ENCODE measurements at regions of chr3 and their contacts with region 1.

Region 1: GRCh38 chr3:30199096-30199759 is 407.2 kb upstream of the TGFBR2 start:
- DNase-seq: peak; percentile 89
- H3K4me3 Mint-ChIP-seq: no peak overlapping the region
- H3K27ac Mint-ChIP-seq: no peak overlapping the region
- H3K4me1 Mint-ChIP-seq: peaks cover 4% of the 10 kb centered on the region
- H3K27me3 Mint-ChIP-seq: peaks cover 2% of the 10 kb centered on the region

Region 2: DNA sequence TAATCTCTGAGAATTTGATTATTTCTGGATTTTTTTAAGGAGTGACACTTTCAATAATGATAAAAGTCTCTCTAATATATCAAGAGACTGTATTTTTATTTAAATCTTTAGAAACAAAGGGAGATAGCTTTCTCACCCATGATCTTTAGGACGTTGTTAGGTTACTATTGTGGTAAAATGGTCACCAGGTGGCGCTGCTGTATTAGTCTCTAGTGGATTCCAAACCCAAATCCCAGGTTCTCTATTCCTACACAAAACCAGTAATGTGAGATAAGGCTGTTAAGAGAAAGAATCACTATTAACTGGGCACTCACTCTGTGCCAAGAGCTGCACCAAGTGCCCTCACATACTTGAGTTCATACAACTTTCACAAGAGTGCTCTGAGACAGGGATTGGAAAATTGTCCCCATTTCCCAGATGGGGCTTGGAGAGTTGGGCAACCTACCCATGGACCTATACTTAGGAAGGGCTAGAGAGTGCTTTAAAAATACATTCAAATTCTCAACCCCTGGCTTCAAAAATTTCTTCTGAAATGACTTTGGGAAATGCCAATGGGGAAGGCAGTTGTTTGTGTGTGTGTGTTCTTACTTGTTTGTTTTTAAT is 186.2 kb before region 1 on chr3:
- intact Hi-C with region 1: loop called (anchors 2 kb)
- DNase-seq: peak; percentile 79
- H3K4me3 Mint-ChIP-seq: no peak overlapping the region
- H3K27ac Mint-ChIP-seq: no peak overlapping the region
- H3K4me1 Mint-ChIP-seq: peaks cover 3% of the 10 kb centered on the region
- H3K27me3 Mint-ChIP-seq: peaks cover 7% of the 10 kb centered on the region

Region 3: GRCh38 chr3:30042274-30042859 is 156.9 kb before region 1 on chr3:
- intact Hi-C with region 1: loop called (anchors 1 kb)
- DNase-seq: peak; percentile 86
- H3K4me3 Mint-ChIP-seq: no peak overlapping the region
- H3K27ac Mint-ChIP-seq: no peak overlapping the region
- H3K4me1 Mint-ChIP-seq: no peaks in the 10 kb centered on the region
- H3K27me3 Mint-ChIP-seq: peaks cover 27% of the 10 kb centered on the region

Region 4: DNA sequence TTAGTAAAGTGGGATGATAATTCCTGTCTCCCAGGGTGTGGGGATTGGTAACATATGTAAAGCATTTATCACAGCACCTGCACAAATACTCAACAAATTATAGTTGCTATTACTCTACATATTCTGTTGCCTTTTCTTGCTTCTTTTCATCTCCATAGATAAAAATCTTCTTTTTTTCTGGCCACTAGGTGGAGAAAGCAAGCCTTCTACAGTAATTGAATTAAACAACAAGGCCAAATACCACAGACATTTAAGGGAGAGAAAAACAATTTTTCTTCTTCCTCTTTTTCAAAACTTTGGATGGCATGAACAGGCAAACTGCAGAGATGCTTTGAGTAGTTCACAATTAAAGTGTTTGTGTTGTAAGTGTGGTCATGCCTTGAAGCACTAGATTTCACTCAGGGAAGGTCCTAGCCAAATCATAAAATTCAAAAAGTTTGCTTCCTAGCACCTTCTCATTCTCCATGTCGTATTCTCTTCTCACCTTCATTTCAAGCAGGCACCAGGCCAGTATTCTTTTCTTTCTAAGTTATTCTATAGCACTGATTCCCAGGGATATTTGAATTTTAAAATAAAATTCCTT is 86.2 kb before region 1 on chr3:
- intact Hi-C with region 1: loop called (anchors 2 kb)
- DNase-seq: peak; percentile 58
- H3K4me3 Mint-ChIP-seq: no peak overlapping the region
- H3K27ac Mint-ChIP-seq: no peak overlapping the region
- H3K4me1 Mint-ChIP-seq: peaks cover 3% of the 10 kb centered on the region
- H3K27me3 Mint-ChIP-seq: peaks cover 17% of the 10 kb centered on the region

Region 5: GRCh38 chr3:30188713-30189112 is 10.5 kb before region 1 on chr3:
- intact Hi-C with region 1: no loop called
- DNase-seq: no peak
- H3K4me3 Mint-ChIP-seq: no peak overlapping the region
- H3K27ac Mint-ChIP-seq: no peak overlapping the region
- H3K4me1 Mint-ChIP-seq: no peaks in the 10 kb centered on the region
- H3K27me3 Mint-ChIP-seq: peaks cover 31% of the 10 kb centered on the region

Measured in activated CD4-positive, alpha-beta T cell treated with anti-CD3 and anti-CD28 coated beads, Interleukin-2, amount 10 ng/mL, durations not matched to agents 24 days and 14 days (primary cell).